ENCODE measurements at regions of chr2 and their contacts with region 1.

Region 1: DNA sequence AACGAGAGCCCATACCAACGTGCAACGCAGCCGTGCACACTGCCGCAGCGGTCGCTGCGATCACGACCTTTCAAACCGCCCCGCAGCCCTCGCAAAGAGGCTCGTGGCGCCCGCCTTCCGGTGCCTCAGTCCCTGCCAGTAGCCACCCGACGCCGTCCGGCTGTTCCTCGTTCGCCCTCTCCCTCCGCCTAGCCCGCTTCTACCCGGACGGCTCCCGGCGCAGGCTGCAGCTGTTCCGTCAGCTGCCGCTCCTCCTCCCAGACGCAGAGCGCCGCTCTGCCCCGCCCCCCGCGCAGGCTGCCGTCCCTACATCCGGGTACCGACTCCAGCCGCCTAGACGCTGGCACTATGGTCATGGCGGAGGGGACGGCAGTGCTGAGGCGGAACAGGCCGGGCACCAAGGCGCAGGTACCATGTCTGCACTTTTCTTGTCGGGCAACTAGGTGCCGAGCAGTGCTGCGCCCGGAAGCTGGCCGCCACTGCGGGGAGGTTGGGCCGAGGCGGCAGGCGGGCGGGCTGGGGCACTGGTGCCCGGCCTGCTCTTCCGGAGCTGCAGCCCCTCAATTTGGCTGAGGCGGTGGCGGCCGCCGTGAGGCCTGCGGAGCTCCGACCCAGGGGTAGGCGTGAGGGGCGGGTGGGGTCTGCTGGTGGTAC is at the start of gene MOB4:
- DNase-seq: peak; percentile 100
- H3K4me3 ChIP-seq: peak within 1 kb of the TSS; percentile 69 to 92 (median 84)
- H3K27ac ChIP-seq: peak within 1 kb of the TSS; percentile 88 to 98 (median 96)
- H3K4me1 ChIP-seq: peaks cover 12 to 61% (median 39%) of the 10 kb centered on the region in 6 donors
- H3K27me3 ChIP-seq: no peaks in the 10 kb centered on the region
- CTCF ChIP-seq: peak in 5 of 11 experiments; percentile 14 to 56 (median 31)
- POLR2A ChIP-seq: peak; percentile 33 to 85 (median 82)
- total RNA-seq, gene MOB4: 15.5 to 38.3 (median 23.7) TPM

Region 2: DNA sequence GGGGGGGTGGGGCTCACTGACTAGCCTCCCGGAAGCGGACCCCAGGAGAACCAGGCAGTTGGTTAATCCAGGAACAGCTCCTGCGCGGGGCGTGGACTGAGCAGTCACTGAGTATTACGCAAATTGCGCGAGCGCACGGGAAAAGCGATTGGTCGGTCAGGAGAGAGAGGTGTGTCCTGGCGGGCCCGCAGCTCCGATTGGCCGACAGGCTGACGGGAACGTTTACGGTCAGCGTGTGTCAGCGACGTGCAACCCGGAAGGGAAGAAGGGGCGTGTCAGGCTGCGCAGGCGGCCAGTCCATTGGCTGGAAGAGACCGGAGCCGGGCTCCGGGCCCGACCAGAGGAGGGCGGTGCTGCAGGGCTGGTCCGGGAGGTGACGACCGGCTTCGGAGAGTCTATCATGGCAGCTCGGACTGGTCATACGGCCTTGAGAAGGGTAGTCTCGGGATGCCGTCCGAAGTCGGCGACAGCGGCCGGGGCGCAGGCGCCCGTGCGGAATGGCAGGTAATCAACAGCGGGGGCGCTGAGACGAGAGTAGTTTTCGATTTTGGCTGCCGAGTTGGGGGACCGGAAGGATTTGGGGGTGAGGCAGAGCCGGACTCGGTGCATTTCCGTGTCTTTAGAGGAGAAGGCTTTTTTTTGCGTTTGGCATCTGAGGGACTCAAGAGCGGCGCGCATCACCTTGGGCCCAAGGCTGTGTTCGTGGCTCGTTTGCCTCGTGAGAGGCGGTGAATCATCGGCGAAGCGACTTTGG is 62.5 kb before region 1 on chr2 and contains the start of gene COQ10B:
- intact Hi-C with region 1: loop called (anchors 10 kb)
- DNase-seq: peak; percentile 100
- H3K4me3 ChIP-seq: peak within 1 kb of the TSS; percentile 55 to 89 (median 74)
- H3K27ac ChIP-seq: peak within 1 kb of the TSS; percentile 95 to 99 (median 98)
- H3K4me1 ChIP-seq: peaks cover 14 to 52% (median 46%) of the 10 kb centered on the region in 6 donors
- H3K27me3 ChIP-seq: no peaks in the 10 kb centered on the region
- CTCF ChIP-seq: peak in 7 of 11 experiments; percentile 20 to 70 (median 60)
- POLR2A ChIP-seq: peak; percentile 57 to 75 (median 59)
- total RNA-seq, gene COQ10B: 24.5 to 34.7 (median 30.1) TPM

Measured in spleen (tissue), 13 donors.